Heart left ventricle (tissue), 16 donors: ENCODE measurements at regions of chr2 and their contacts with region 1.

Region 1: GRCh38 chr2:158953926-158954763 is 14.3 kb upstream of the TANC1 start:
- DNase-seq: peak; percentile 77 to 82 (median 80)
- ATAC-seq: peak; percentile 82 to 93 (median 90)
- H3K4me3 ChIP-seq: no peak overlapping the region
- H3K27ac ChIP-seq: peak overlapping the region in 11 of 12 donors; percentile 7 to 72 (median 60)
- H3K4me1 ChIP-seq: peaks cover 7 to 25% (median 17%) of the 10 kb centered on the region in 12 donors
- H3K27me3 ChIP-seq: no peaks in the 10 kb centered on the region
- CTCF ChIP-seq: no peak
- POLR2A ChIP-seq: no peak

Region 2: DNA sequence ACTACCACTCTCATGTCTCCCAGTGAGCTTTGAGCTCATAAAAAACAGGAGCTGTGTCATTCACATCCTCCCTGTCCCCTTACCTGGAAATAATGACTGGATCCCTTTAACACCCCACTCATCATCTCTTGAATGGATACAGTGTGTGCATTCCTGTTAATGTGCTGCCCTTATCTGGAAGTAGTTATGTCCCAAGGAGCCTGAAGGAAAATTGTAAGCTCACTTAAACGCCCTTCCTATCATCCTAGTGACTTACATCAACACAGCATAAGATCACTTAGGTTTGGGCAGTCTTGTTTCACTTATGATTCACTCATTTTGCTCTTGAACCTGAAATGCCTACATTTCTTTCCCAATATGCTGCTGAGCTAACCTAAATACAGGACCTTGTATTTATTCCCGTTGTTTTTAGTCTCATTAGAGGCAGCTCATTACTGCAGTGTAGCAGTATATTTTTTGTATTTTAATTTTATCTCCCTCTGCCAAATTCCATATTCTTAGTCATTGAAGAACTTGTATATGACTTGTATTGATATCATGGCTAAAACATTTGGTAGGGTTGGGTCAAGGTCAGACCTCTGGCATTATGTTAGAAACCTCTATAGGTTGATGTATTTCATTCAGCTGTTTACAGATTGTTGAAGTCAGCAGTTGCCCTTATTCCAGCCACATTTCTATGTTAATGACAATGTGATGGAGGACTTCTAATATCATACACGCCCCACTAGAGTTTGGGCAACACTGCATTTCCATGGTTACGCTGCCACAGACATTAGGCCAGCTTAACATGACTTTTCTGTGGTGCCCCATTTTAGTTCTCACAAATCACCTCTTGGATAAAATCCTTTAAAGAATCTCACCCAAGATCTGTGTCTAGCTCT is 424.5 kb before region 1 on chr2:
- intact Hi-C with region 1: no loop called
- DNase-seq: no peak
- ATAC-seq: peak in 2 of 4 donors; percentile 34 to 53
- H3K4me3 ChIP-seq: no peak overlapping the region
- H3K27ac ChIP-seq: no peak overlapping the region
- H3K4me1 ChIP-seq: peaks cover 0 to 3% (median 0%) of the 10 kb centered on the region in 12 donors
- H3K27me3 ChIP-seq: no peaks in the 10 kb centered on the region
- CTCF ChIP-seq: no peak
- POLR2A ChIP-seq: no peak

Region 3: DNA sequence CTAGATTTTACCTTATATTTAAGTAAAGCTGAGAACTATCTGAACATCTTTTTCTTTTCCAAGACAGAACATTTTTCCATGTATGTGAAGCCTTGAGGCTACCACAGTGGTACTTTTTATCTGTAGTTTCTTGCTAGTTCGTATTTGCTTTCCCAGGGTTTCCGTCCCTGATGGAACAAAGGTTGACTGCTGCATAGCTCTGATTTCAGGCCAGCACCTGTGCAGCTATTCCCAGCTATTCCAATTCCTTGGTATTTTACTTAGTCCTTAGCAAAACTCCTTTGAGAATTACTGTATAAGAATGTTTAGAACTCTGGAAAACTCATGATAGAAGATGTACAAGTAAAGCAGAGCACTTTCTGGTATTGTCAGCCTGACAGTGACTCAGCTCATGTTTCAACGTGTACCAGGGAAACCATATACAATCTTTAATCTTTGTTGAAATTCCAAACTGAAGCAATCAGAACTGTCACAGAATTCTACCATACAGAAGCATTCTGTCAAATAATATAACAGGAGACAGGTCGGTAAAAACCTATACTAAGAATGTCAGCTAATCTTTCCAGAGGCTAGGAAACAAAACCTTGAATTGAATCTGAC is 335.2 kb before region 1 on chr2:
- intact Hi-C with region 1: no loop called
- DNase-seq: no peak
- ATAC-seq: no peak
- H3K4me3 ChIP-seq: no peak overlapping the region
- H3K27ac ChIP-seq: no peak overlapping the region
- H3K4me1 ChIP-seq: peaks cover 0 to 11% (median 0%) of the 10 kb centered on the region in 12 donors
- H3K27me3 ChIP-seq: no peaks in the 10 kb centered on the region
- CTCF ChIP-seq: peak in 1 of 12 donors; percentile 8
- POLR2A ChIP-seq: no peak

Region 4: GRCh38 chr2:158923180-158923594 is 31.0 kb before region 1 on chr2:
- intact Hi-C with region 1: loop called in 1 of 10 experiments (anchors 5 kb)
- DNase-seq: no peak
- ATAC-seq: no peak
- H3K4me3 ChIP-seq: no peak overlapping the region
- H3K27ac ChIP-seq: no peak overlapping the region
- H3K4me1 ChIP-seq: peaks cover 0 to 5% (median 0%) of the 10 kb centered on the region in 12 donors
- H3K27me3 ChIP-seq: no peaks in the 10 kb centered on the region
- CTCF ChIP-seq: no peak
- POLR2A ChIP-seq: no peak